ENCODE measurements at regions of chr1 and their contacts with region 1.

Region 1: GRCh38 chr1:56639210-56639609 is 5.9 kb upstream of the PRKAA2 start:
- DNase-seq: no peak
- ATAC-seq: no peak
- H3K4me3 ChIP-seq: no peak overlapping the region
- H3K27ac ChIP-seq: no peak overlapping the region
- H3K4me1 ChIP-seq: peaks cover 0 to 4% (median under 1%) of the 10 kb centered on the region in 12 donors
- H3K27me3 ChIP-seq: peaks cover 0 to 13% (median 0%) of the 10 kb centered on the region in 9 donors
- CTCF ChIP-seq: no peak
- POLR2A ChIP-seq: no peak

Region 2: DNA sequence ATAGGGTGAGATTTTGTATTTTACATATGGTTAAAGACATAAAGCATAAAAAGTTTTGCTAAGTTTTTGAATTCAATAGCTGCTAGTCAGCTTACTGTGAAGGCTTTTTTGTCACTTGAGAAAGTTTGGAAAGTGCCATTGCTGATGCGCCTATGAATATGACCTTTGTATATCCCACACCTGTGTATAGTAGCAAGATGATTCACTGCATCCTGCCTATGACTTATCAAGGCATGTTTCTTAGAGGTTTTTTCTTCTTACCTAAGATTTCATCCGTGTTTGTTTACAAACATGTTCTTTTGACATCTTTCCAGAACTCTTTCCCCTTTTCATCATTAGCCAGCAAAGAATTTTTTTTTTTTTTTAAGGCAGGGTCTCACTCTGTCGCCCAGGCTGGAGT is 57.5 kb after region 1 on chr1:
- intact Hi-C with region 1: loop called in 2 of 10 experiments (anchors 10 kb)
- DNase-seq: no peak
- ATAC-seq: no peak
- H3K4me3 ChIP-seq: no peak overlapping the region
- H3K27ac ChIP-seq: no peak overlapping the region
- H3K4me1 ChIP-seq: no peaks in the 10 kb centered on the region
- H3K27me3 ChIP-seq: no peaks in the 10 kb centered on the region
- CTCF ChIP-seq: no peak
- POLR2A ChIP-seq: no peak

Region 3: GRCh38 chr1:56728964-56729363 is 89.8 kb after region 1 on chr1:
- intact Hi-C with region 1: no loop called
- DNase-seq: no peak
- ATAC-seq: no peak
- H3K4me3 ChIP-seq: no peak overlapping the region
- H3K27ac ChIP-seq: no peak overlapping the region
- H3K4me1 ChIP-seq: no peaks in the 10 kb centered on the region
- H3K27me3 ChIP-seq: no peaks in the 10 kb centered on the region
- CTCF ChIP-seq: no peak
- POLR2A ChIP-seq: no peak